Sciatic nerve (tissue), 2 donors: ENCODE measurements at regions of chr5 and their contacts with region 1.

Region 1: GRCh38 chr5:31639481-31640411 is 815 bp downstream of the PDZD2 start:
- DNase-seq: peak; percentile 61
- ATAC-seq: peak; percentile 11

Region 2: DNA sequence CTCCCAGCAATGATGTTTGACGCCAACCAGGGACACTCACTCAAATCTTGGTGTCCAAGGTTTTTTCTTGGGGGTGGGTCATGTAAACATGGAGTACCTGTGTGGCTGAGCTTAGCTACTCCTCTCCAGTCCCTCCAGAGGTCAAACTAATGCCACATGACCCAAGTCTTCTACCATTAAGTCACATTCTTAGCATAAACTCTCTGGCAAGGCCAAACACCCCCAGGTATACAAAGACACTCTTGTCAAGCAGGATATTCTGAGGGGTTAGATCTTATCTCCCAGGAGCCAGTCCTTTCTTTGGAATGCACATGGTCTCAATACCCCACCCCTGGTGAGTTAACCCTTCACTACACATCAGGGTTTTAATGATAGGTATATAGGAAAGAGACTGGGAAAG is 160.6 kb after region 1 on chr5:
- intact Hi-C with region 1: loop called (anchors 5 kb)
- DNase-seq: no peak
- ATAC-seq: no peak